ENCODE measurements at regions of chr6 and their contacts with region 1.

Region 1: DNA sequence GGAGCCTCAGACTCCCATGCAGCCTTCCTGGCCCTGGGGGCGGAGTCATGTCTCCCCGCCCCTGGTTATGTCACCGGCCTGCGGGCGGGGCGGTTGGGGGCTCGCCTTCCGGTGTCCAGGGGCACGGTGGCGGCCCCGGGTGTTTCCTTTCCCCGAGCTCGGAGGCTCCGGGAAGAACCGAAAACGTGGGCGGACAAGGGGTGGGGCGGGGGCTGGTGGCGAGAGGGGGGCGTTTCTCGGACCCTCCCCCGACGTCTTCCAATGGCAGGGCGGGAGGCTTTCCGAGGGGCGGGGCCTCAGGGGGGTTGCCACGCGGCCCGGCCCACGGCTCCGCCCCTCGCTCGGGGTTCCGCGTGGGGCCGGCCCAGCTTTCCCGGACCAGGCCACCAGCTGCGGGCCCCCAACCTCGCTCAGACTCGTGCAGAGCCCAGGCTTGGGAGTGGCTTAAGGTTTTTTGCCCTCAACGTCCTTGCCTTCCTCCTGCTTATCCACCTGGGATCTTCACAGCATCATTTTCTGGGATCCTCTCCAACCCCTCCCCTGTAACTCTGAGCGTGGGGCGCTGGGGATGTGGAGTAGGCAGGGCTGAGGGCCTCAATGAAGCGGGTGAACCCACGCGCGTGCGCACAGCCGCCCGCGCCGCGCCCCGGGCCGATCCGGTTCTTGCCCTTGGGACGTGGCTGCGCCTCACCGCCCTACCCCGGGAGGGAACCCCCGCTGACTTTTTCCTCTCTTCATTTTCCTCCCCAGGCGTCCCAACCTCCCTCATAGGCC is 2.1 kb upstream of the NRN1 start:
- DNase-seq: peak; percentile 73
- H3K4me3 Mint-ChIP-seq: peak overlapping the region; percentile 67
- H3K27ac Mint-ChIP-seq: no peak overlapping the region
- H3K4me1 Mint-ChIP-seq: peaks cover 26% of the 10 kb centered on the region
- H3K27me3 Mint-ChIP-seq: peaks cover 66% of the 10 kb centered on the region

Region 2: GRCh38 chr6:5471044-5471443 is 537.8 kb before region 1 on chr6:
- CTCF ChIA-PET with region 1: no interaction called
- intact Hi-C with region 1: loop called (anchors 1 kb)
- DNase-seq: peak; percentile 79
- H3K4me3 Mint-ChIP-seq: no peak overlapping the region
- H3K27ac Mint-ChIP-seq: no peak overlapping the region
- H3K4me1 Mint-ChIP-seq: peaks cover 11% of the 10 kb centered on the region
- H3K27me3 Mint-ChIP-seq: no peaks in the 10 kb centered on the region

Region 3: GRCh38 chr6:5626727-5627426 is 382.0 kb before region 1 on chr6:
- CTCF ChIA-PET with region 1: no interaction called
- intact Hi-C with region 1: loop called (anchors 1 kb)
- DNase-seq: peak; percentile 54
- H3K4me3 Mint-ChIP-seq: peak overlapping the region; percentile 2
- H3K27ac Mint-ChIP-seq: no peak overlapping the region
- H3K4me1 Mint-ChIP-seq: peaks cover 50% of the 10 kb centered on the region
- H3K27me3 Mint-ChIP-seq: no peaks in the 10 kb centered on the region

Region 4: GRCh38 chr6:5832668-5833067 is 176.2 kb before region 1 on chr6:
- CTCF ChIA-PET with region 1: no interaction called
- intact Hi-C with region 1: loop called (anchors 5 kb)
- DNase-seq: no peak
- H3K4me3 Mint-ChIP-seq: no peak overlapping the region
- H3K27ac Mint-ChIP-seq: peak overlapping the region; percentile 70
- H3K4me1 Mint-ChIP-seq: peaks cover 44% of the 10 kb centered on the region
- H3K27me3 Mint-ChIP-seq: no peaks in the 10 kb centered on the region

Region 5: DNA sequence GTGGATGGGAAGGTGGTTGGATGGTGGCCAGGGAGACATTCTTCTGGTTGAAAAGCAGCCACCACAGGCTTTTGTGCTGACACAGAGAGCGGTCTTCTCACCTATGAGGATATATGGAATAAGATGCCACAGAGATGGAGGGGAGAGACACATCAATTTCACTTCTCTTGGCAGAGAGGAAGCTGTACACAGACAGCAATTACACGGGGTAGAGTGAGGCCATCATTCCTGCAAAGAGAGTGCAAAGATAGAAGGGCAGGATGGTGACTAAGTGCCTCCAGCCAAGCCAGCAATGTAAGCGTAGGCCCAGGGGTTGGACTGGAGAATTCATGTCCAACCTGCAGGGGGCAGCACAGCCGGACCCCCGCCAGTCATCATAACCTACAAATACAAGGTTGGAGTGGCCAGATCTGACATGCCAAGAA is 58.5 kb before region 1 on chr6:
- CTCF ChIA-PET with region 1: no interaction called
- intact Hi-C with region 1: loop called (anchors 2 kb)
- DNase-seq: peak; percentile 25
- H3K4me3 Mint-ChIP-seq: no peak overlapping the region
- H3K27ac Mint-ChIP-seq: no peak overlapping the region
- H3K4me1 Mint-ChIP-seq: no peaks in the 10 kb centered on the region
- H3K27me3 Mint-ChIP-seq: no peaks in the 10 kb centered on the region

Region 6: DNA sequence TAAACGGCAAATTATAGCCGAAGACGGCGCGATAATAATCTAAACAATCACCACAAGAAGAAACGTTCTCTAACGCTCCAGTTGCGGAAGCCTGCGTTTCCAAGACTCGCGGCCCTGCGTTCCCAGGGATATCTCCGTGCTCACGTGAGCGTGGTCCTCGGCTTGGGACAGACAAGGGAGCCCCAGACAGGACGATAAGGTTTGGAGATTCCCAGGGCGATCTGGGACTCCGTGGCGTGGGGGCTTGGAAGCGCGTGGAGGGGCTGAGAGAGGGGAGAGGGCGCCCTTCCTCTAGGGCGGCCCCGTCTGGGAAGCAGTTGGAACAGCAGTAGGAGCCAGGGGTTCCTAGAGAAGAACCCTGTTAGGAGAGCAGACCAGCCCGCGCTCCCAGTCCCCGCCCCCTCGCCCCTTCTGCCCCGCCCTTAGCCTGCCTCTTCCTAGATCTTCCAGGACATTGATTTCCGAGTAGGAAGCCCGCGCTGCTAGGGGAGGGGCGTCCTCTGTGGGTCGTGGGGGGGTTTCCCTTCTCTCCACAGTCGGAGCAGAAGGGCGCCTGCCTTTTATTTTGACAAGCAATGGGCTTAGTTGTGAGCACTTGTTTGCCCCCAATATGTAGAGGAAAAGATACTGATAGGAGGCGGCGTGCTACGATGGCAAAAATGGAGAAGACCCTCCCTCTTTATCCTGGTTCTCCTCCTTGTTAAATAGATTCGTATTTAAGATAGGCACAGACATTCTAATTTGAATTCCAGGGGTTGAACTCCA is 12.7 kb before region 1 on chr6:
- CTCF ChIA-PET with region 1: interaction called, 4 read pairs
- intact Hi-C with region 1: loop called (anchors 1 kb)
- DNase-seq: peak; percentile 14
- H3K4me3 Mint-ChIP-seq: peak overlapping the region; percentile 77
- H3K27ac Mint-ChIP-seq: no peak overlapping the region
- H3K4me1 Mint-ChIP-seq: peaks cover 50% of the 10 kb centered on the region
- H3K27me3 Mint-ChIP-seq: peaks cover 80% of the 10 kb centered on the region

Region 7: GRCh38 chr6:6293317-6293716 is 284.5 kb after region 1 on chr6:
- CTCF ChIA-PET with region 1: no interaction called
- intact Hi-C with region 1: no loop called
- DNase-seq: no peak
- H3K4me3 Mint-ChIP-seq: no peak overlapping the region
- H3K27ac Mint-ChIP-seq: no peak overlapping the region
- H3K4me1 Mint-ChIP-seq: no peaks in the 10 kb centered on the region
- H3K27me3 Mint-ChIP-seq: peaks cover 12% of the 10 kb centered on the region

Measured in activated naive CD4-positive, alpha-beta T cell treated with anti-CD3 and anti-CD28 coated beads for 36 hours (primary cell).